ENCODE measurements at regions of chr21 and their contacts with region 1.

Region 1: GRCh38 chr21:45102391-45102932 is 28.1 kb downstream of the ADARB1 start:
- DNase-seq: no peak
- H3K4me3 ChIP-seq: no peak overlapping the region
- H3K27ac ChIP-seq: no peak overlapping the region
- H3K4me1 ChIP-seq: peaks cover 7 to 11% of the 10 kb centered on the region in 2 donors
- H3K27me3 ChIP-seq: no peaks in the 10 kb centered on the region
- CTCF ChIP-seq: peak in 2 of 3 donors; percentile 27 to 32
- POLR2A ChIP-seq: no peak

Region 2: GRCh38 chr21:45029298-45029947 is 73.0 kb before region 1 on chr21:
- intact Hi-C with region 1: no loop called
- DNase-seq: peak in 1 of 2 donors; percentile 45
- H3K4me3 ChIP-seq: no peak overlapping the region
- H3K27ac ChIP-seq: no peak overlapping the region
- H3K4me1 ChIP-seq: no peaks in the 10 kb centered on the region
- H3K27me3 ChIP-seq: no peaks in the 10 kb centered on the region
- CTCF ChIP-seq: no peak
- POLR2A ChIP-seq: no peak

Region 3: GRCh38 chr21:45747802-45748445 is 645.5 kb after region 1 on chr21:
- intact Hi-C with region 1: loop called (anchors 5 kb)
- DNase-seq: peak in 1 of 2 donors; percentile 50
- H3K4me3 ChIP-seq: no peak overlapping the region
- H3K27ac ChIP-seq: no peak overlapping the region
- H3K4me1 ChIP-seq: no peaks in the 10 kb centered on the region
- H3K27me3 ChIP-seq: peaks cover 0 to 8% of the 10 kb centered on the region in 2 donors
- CTCF ChIP-seq: no peak
- POLR2A ChIP-seq: no peak